Activated B cell treated with CpG ODN at 0.5 μM for 24 hours (primary cell): ENCODE measurements at regions of chr6 and their contacts with region 1.

Region 1: GRCh38 chr6:5995949-5996713 is 10.6 kb downstream of the NRN1 start:
- DNase-seq: no peak
- ATAC-seq: no peak
- H3K4me3 Mint-ChIP-seq: peak overlapping the region; percentile 83
- H3K27ac Mint-ChIP-seq: peak overlapping the region; percentile 51
- H3K4me1 Mint-ChIP-seq: peaks cover 50% of the 10 kb centered on the region
- H3K27me3 Mint-ChIP-seq: peaks cover 80% of the 10 kb centered on the region
- CTCF ChIP-seq: no peak

Region 2: GRCh38 chr6:5584078-5584482 is 412.1 kb before region 1 on chr6:
- CTCF ChIA-PET with region 1: no interaction called
- POLR2A ChIA-PET with region 1: no interaction called
- intact Hi-C with region 1: loop called (anchors 5 kb)
- DNase-seq: no peak
- ATAC-seq: no peak
- H3K4me3 Mint-ChIP-seq: no peak overlapping the region
- H3K27ac Mint-ChIP-seq: no peak overlapping the region
- H3K4me1 Mint-ChIP-seq: peaks cover 17% of the 10 kb centered on the region
- H3K27me3 Mint-ChIP-seq: no peaks in the 10 kb centered on the region
- CTCF ChIP-seq: no peak

Region 3: DNA sequence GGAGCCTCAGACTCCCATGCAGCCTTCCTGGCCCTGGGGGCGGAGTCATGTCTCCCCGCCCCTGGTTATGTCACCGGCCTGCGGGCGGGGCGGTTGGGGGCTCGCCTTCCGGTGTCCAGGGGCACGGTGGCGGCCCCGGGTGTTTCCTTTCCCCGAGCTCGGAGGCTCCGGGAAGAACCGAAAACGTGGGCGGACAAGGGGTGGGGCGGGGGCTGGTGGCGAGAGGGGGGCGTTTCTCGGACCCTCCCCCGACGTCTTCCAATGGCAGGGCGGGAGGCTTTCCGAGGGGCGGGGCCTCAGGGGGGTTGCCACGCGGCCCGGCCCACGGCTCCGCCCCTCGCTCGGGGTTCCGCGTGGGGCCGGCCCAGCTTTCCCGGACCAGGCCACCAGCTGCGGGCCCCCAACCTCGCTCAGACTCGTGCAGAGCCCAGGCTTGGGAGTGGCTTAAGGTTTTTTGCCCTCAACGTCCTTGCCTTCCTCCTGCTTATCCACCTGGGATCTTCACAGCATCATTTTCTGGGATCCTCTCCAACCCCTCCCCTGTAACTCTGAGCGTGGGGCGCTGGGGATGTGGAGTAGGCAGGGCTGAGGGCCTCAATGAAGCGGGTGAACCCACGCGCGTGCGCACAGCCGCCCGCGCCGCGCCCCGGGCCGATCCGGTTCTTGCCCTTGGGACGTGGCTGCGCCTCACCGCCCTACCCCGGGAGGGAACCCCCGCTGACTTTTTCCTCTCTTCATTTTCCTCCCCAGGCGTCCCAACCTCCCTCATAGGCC is 12.7 kb after region 1 on chr6:
- CTCF ChIA-PET with region 1: interaction called, 3 read pairs
- POLR2A ChIA-PET with region 1: no interaction called
- intact Hi-C with region 1: loop called (anchors 1 kb)
- DNase-seq: peak; percentile 36
- ATAC-seq: peak; percentile 65
- H3K4me3 Mint-ChIP-seq: peak overlapping the region; percentile 78
- H3K27ac Mint-ChIP-seq: no peak overlapping the region
- H3K4me1 Mint-ChIP-seq: peaks cover 38% of the 10 kb centered on the region
- H3K27me3 Mint-ChIP-seq: peaks cover 57% of the 10 kb centered on the region
- CTCF ChIP-seq: no peak